Kidney (tissue), 22 donors: ENCODE measurements at regions of chr15 and their contacts with region 1.

Region 1: DNA sequence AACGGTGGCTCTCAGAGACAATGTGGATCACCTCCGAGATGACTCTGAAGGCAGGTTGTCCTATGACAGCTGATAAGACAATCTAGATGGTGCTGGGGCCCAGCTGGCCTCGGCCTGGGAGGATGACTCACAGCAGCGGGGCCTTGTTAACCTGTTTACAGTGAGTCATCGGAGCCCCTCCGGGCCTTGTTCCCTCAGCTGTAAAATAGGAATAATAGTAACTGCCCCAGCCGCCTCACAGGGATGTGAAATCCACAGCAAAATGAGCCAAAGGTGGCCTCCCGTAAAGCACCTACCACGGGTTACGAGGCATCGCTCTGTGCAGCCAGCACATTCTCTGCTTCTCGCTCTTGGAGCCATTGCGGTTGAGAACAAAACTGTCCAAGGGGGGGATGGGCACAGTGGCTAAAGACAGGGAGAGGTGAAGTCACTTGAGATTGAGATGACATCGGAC is 88.6 kb upstream of the RASGRF1 start:
- DNase-seq: no peak
- H3K4me3 ChIP-seq: no peak overlapping the region
- H3K27ac ChIP-seq: no peak overlapping the region
- H3K4me1 ChIP-seq: no peaks in the 10 kb centered on the region
- H3K27me3 ChIP-seq: no peaks in the 10 kb centered on the region
- CTCF ChIP-seq: no peak

Region 2: DNA sequence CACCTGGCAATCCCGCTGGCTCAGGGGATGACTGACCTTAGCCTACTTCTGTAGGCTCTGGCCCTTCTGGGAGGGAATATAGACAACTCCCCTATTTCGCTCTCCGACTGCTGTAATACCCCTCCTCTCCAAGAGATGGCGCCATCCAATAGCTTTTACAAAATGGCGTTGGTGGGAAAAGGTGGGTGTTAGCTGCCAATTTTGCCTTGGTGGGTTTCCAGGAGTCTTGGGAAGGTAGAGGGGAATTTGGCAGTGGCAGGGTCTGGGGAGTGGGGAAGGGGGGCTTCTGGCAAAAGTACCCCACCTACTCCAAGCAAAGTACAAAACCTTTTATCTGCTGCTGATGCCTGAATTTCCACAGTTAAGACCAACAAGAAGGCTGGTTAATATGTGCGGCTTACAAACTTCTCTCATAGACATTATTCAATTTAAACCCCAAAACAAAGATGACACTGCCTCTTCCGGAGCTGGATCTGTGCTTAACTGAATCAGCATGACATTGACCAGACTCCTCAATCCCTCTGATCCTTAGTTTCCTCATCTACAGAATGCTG is 150.6 kb before region 1 on chr15:
- intact Hi-C with region 1: loop called (anchors 5 kb)
- DNase-seq: peak in 4 of 5 donors; percentile 17 to 62 (median 48)
- H3K4me3 ChIP-seq: no peak overlapping the region
- H3K27ac ChIP-seq: no peak overlapping the region
- H3K4me1 ChIP-seq: no peaks in the 10 kb centered on the region
- H3K27me3 ChIP-seq: no peaks in the 10 kb centered on the region
- CTCF ChIP-seq: peak; percentile 80

Region 3: GRCh38 chr15:79243723-79244122 is 64.6 kb after region 1 on chr15:
- intact Hi-C with region 1: no loop called
- DNase-seq: peak in 1 of 5 donors; percentile 12
- H3K4me3 ChIP-seq: no peak overlapping the region
- H3K27ac ChIP-seq: no peak overlapping the region
- H3K4me1 ChIP-seq: no peaks in the 10 kb centered on the region
- H3K27me3 ChIP-seq: no peaks in the 10 kb centered on the region
- CTCF ChIP-seq: no peak

Region 4: GRCh38 chr15:79549196-79549595 is 370.1 kb after region 1 on chr15:
- intact Hi-C with region 1: no loop called
- DNase-seq: no peak
- H3K4me3 ChIP-seq: no peak overlapping the region
- H3K27ac ChIP-seq: no peak overlapping the region
- H3K4me1 ChIP-seq: no peaks in the 10 kb centered on the region
- H3K27me3 ChIP-seq: no peaks in the 10 kb centered on the region
- CTCF ChIP-seq: no peak